ENCODE measurements at regions of chr5 and their contacts with region 1.

Region 1: DNA sequence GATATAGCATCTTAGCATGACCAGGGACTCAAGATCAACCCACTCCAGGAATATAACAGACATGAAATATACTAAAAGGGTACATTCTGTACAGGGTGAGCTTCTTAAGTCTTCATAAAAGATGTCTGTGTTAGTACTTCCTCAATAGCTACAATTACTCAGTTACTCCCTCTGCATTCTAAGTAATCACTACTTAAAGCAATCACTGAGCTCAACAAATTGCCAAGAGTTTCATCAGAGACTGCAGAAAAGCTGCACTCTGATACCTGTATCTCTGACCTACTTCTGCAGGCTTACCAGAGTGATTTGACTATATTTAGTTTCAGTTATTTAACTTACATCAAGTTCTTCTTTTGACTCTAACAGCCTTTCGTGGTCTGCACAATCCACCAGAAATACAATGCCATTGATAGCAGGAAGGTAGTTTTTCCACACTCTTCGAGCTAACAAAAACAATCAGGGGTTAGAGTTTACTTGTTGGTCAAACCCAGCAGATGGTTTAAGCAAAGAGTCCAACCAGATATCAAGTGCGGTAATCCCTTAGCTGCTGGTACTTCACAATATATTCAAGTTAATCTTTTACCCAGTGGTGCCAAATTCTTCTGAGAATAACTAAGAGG is 23.3 kb downstream of the SAR1B start:
- DNase-seq: peak; percentile 8
- H3K4me3 Mint-ChIP-seq: peak overlapping the region; percentile 2
- H3K27ac Mint-ChIP-seq: peak overlapping the region; percentile 91
- H3K4me1 Mint-ChIP-seq: peaks cover 48% of the 10 kb centered on the region
- H3K27me3 Mint-ChIP-seq: no peaks in the 10 kb centered on the region

Region 2: GRCh38 chr5:133977161-133977787 is 632.1 kb before region 1 on chr5:
- CTCF ChIA-PET with region 1: no interaction called
- POLR2A ChIA-PET with region 1: interaction called, 12 read pairs
- DNase-seq: no peak
- H3K4me3 Mint-ChIP-seq: no peak overlapping the region
- H3K27ac Mint-ChIP-seq: peak overlapping the region; percentile 74
- H3K4me1 Mint-ChIP-seq: peaks cover 20% of the 10 kb centered on the region
- H3K27me3 Mint-ChIP-seq: no peaks in the 10 kb centered on the region

Region 3: DNA sequence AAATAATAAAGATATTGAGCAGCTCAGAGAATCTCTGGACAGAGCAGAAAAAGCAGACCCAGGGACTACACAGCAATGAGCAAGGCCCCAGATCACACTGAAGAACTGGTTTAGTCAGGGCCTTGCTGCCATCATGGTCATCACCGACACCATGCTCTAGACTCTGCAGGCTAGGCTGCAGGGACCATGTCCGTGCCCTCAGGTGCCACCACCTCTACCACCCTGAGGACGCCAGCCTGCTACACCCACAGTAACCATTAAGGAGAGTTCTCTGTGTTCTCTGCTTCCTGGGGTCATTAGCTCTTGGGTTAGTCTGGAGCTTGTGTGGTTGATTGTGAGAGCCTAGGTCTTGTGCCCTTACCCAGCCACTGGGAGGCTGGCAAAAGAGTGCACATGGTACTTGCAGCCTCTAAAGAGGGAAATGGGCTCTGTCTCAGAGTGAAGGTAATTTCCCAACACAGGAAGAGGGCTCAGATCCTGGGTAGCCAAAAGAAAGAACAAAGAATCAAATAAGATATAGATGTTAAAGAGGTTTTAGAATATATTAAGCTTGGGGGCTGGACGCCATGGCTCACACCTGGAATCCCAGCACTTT is 115.8 kb before region 1 on chr5:
- CTCF ChIA-PET with region 1: no interaction called
- POLR2A ChIA-PET with region 1: interaction called, 17 read pairs
- DNase-seq: no peak
- H3K4me3 Mint-ChIP-seq: no peak overlapping the region
- H3K27ac Mint-ChIP-seq: no peak overlapping the region
- H3K4me1 Mint-ChIP-seq: peaks cover 3% of the 10 kb centered on the region
- H3K27me3 Mint-ChIP-seq: no peaks in the 10 kb centered on the region

Region 4: GRCh38 chr5:134533115-134533815 is 76.1 kb before region 1 on chr5:
- CTCF ChIA-PET with region 1: no interaction called
- POLR2A ChIA-PET with region 1: no interaction called
- DNase-seq: no peak
- H3K4me3 Mint-ChIP-seq: no peak overlapping the region
- H3K27ac Mint-ChIP-seq: no peak overlapping the region
- H3K4me1 Mint-ChIP-seq: peaks cover 60% of the 10 kb centered on the region
- H3K27me3 Mint-ChIP-seq: no peaks in the 10 kb centered on the region

Region 5: GRCh38 chr5:134555890-134556311 is 53.4 kb before region 1 on chr5:
- CTCF ChIA-PET with region 1: no interaction called
- POLR2A ChIA-PET with region 1: no interaction called
- DNase-seq: peak; percentile 82
- H3K4me3 Mint-ChIP-seq: no peak overlapping the region
- H3K27ac Mint-ChIP-seq: peak overlapping the region; percentile 90
- H3K4me1 Mint-ChIP-seq: peaks cover 31% of the 10 kb centered on the region
- H3K27me3 Mint-ChIP-seq: no peaks in the 10 kb centered on the region